Tibial artery (tissue), 4 donors: ENCODE measurements at regions of chr12 and their contacts with region 1.

Region 1: GRCh38 chr12:79522257-79522988 is 168.3 kb downstream of the PAWR start:
- DNase-seq: no peak
- H3K4me3 ChIP-seq: no peak overlapping the region
- H3K27ac ChIP-seq: no peak overlapping the region
- H3K4me1 ChIP-seq: peaks cover 0 to 15% (median 0%) of the 10 kb centered on the region in 4 donors
- H3K27me3 ChIP-seq: no peaks in the 10 kb centered on the region
- CTCF ChIP-seq: no peak

Region 2: GRCh38 chr12:79420146-79420618 is 102.2 kb before region 1 on chr12:
- intact Hi-C with region 1: loop called (anchors 10 kb)
- DNase-seq: no peak
- H3K4me3 ChIP-seq: no peak overlapping the region
- H3K27ac ChIP-seq: peak overlapping the region; percentile 24 to 34
- H3K4me1 ChIP-seq: peaks cover 0 to 57% (median 15%) of the 10 kb centered on the region in 4 donors
- H3K27me3 ChIP-seq: no peaks in the 10 kb centered on the region
- CTCF ChIP-seq: peak; percentile 50 to 58